ENCODE measurements at regions of chr1 and their contacts with region 1.

Region 1: GRCh38 chr1:226642876-226643576 is 94.5 kb downstream of the STUM start:
- DNase-seq: peak; percentile 81 to 92 (median 90)
- H3K4me3 ChIP-seq: peak overlapping the region in 5 of 7 experiments; percentile 2 to 55 (median 43)
- H3K27ac ChIP-seq: peak overlapping the region in 1 of 2 experiments; percentile 65
- H3K4me1 ChIP-seq: peaks cover 3 to 54% (median 45%) of the 10 kb centered on the region in 4 experiments
- H3K27me3 ChIP-seq: no peaks in the 10 kb centered on the region

Region 2: GRCh38 chr1:226600254-226600770 is 42.7 kb before region 1 on chr1:
- CTCF ChIA-PET with region 1: no interaction called
- POLR2A ChIA-PET with region 1: no interaction called
- DNase-seq: no peak
- H3K4me3 ChIP-seq: no peak overlapping the region
- H3K27ac ChIP-seq: no peak overlapping the region
- H3K4me1 ChIP-seq: peaks cover 0 to 2% (median 0%) of the 10 kb centered on the region in 4 experiments
- H3K27me3 ChIP-seq: no peaks in the 10 kb centered on the region

Region 3: GRCh38 chr1:226662642-226663326 is 19.8 kb after region 1 on chr1:
- CTCF ChIA-PET with region 1: interaction called, 24 read pairs
- POLR2A ChIA-PET with region 1: no interaction called
- DNase-seq: peak; percentile 70 to 92 (median 89)
- H3K4me3 ChIP-seq: no peak overlapping the region
- H3K27ac ChIP-seq: peak overlapping the region in 1 of 2 experiments; percentile 54
- H3K4me1 ChIP-seq: peaks cover 29 to 85% (median 70%) of the 10 kb centered on the region in 4 experiments
- H3K27me3 ChIP-seq: no peaks in the 10 kb centered on the region

Region 4: DNA sequence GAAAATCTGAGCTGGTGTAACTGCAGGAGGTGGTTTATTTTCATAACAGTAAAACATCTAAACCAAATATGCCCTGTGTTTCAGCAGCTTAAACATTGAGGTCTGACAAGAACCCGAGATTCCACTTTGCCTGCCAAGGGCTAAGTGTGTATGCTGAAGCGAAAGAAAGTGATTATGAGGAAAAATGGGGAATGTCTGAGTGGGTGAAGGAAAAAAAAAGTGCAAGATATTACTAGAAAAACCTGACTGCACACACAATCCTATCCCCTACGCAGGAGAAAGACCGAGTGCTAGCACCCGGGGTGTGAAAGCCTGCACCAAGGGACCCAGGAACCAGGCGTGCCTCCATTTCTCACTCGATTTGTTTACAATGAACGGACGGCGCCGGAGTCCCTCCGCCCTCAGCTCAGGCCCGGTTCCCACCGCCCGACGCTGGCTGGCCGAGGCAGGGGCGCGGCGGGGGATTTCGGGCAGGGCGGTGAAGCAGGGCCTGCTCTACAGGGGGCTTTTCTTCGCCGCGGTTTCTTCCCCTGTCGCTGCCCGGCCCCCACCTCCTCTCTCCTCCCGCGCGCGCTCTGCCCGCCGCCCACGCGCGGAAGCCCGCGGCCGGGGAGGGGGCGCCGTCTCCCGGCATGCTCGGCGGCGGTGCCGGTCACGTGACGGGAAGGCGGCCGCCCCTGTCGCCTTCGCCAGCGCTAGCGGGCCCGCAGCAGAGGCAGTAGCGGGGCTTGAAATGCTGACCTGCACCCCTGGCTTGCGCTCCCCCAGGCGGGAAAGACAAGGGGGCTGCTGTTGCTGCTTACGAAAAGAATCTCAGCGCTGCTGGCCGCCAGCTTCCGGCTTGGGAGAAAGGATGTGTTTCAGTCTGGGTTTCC is 60.2 kb after region 1 on chr1:
- CTCF ChIA-PET with region 1: no interaction called
- POLR2A ChIA-PET with region 1: no interaction called
- DNase-seq: peak; percentile 68 to 88 (median 85)
- H3K4me3 ChIP-seq: peak overlapping the region; percentile 54 to 81 (median 79)
- H3K27ac ChIP-seq: peak overlapping the region; percentile 89 to 92
- H3K4me1 ChIP-seq: peaks cover 8 to 24% (median 17%) of the 10 kb centered on the region in 4 experiments
- H3K27me3 ChIP-seq: no peaks in the 10 kb centered on the region

Region 5: GRCh38 chr1:226827968-226828513 is 185.0 kb after region 1 on chr1:
- CTCF ChIA-PET with region 1: interaction called, 106 read pairs
- POLR2A ChIA-PET with region 1: no interaction called
- DNase-seq: peak; percentile 93 to 97 (median 96)
- H3K4me3 ChIP-seq: peak overlapping the region in 4 of 7 experiments; percentile 13 to 63 (median 48)
- H3K27ac ChIP-seq: peak overlapping the region; percentile 59 to 85
- H3K4me1 ChIP-seq: peaks cover 4 to 15% (median 9%) of the 10 kb centered on the region in 4 experiments
- H3K27me3 ChIP-seq: no peaks in the 10 kb centered on the region

Measured in common myeloid progenitor, CD34-positive (primary cell).